ENCODE measurements at regions of chr14 and their contacts with region 1.

Region 1: DNA sequence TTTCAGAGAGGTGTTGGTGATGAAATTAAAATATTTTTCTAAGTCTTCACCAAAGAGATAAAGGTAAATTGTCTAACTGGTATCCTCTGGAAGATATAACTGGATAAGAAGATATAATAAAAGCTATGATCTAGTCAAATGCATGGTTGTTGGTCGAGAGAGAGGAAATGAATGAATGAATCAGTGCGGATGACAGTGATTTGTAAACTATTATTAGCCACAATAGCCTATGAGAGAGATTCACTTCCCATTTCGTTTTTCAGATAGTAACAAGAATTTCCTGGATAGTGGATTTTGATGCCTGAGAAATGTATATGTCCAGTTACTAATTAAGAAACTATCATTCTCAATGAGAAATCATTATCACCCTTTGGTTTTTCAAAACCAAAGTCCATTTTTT is 63.1 kb downstream of the HEATR5A start:
- DNase-seq: no peak
- ATAC-seq: no peak
- H3K4me3 ChIP-seq: no peak overlapping the region
- H3K27ac ChIP-seq: no peak overlapping the region
- H3K4me1 ChIP-seq: peaks cover 20% of the 10 kb centered on the region
- H3K27me3 ChIP-seq: no peaks in the 10 kb centered on the region
- CTCF ChIP-seq: no peak

Region 2: DNA sequence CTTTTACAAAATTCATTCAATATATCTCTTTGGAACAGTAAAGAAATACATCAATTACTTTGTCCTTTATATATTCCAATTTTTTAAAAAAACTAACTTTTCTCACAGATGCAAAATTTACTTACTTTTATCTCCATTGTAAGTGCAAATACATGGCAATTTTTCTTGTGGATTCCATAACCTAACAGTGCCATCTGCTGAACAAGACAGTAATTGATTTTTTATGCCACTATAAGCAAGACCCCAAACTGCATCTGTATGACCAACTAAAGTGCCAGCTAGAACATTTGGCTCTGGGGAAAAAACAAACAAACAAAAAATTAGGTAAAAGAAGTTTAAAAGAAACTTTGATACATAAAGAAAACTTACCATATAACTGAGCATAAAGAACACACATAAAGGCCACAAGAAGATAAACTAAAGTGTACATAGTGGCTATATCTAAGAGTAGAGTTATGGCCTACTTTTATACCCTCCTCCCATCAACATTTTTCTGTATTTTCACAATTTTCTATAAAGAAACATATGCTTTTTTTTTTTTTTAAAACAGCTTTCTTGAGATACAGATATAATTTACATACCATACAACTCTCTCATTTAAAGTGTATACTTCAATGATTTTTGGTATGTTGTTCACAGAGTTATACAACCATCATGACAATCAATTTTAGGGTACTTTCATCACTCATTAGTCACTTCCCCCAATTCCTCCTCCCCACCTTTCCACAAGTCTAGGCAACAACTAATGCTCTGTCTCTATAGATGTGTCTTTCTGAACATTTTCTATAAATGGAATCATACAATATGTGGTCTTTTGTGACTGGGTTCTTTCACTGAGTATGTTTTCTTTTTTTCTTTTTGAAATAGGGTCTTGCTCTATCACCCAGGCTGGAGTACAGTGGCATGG is 450.3 kb before region 1 on chr14:
- intact Hi-C with region 1: loop called in 1 of 2 experiments (anchors 10 kb)
- DNase-seq: no peak
- ATAC-seq: no peak
- H3K4me3 ChIP-seq: no peak overlapping the region
- H3K27ac ChIP-seq: peak overlapping the region; percentile 25
- H3K4me1 ChIP-seq: no peaks in the 10 kb centered on the region
- H3K27me3 ChIP-seq: no peaks in the 10 kb centered on the region
- CTCF ChIP-seq: peak; percentile 14

Region 3: DNA sequence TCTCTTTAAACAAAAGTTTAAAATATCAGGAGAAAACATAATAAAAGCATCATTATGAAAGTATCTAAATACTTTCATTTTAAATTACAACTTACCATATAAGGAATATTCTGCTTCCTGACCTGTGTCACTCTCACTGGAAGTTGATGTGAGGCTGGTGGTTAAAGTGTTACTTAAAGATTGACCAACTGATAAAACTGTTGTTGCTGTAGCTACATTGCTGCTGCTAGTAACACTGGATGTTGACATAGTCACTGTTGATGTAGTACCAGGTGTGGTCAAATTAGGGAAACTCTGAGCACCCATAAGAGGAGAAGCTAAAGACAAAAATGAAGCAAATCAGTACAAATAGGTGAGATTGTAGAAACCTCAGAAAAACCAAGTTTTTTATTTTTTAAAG is 229.6 kb before region 1 on chr14:
- intact Hi-C with region 1: loop called in 1 of 2 experiments (anchors 10 kb)
- DNase-seq: no peak
- ATAC-seq: no peak
- H3K4me3 ChIP-seq: no peak overlapping the region
- H3K27ac ChIP-seq: no peak overlapping the region
- H3K4me1 ChIP-seq: peaks cover 11% of the 10 kb centered on the region
- H3K27me3 ChIP-seq: no peaks in the 10 kb centered on the region
- CTCF ChIP-seq: no peak

Region 4: DNA sequence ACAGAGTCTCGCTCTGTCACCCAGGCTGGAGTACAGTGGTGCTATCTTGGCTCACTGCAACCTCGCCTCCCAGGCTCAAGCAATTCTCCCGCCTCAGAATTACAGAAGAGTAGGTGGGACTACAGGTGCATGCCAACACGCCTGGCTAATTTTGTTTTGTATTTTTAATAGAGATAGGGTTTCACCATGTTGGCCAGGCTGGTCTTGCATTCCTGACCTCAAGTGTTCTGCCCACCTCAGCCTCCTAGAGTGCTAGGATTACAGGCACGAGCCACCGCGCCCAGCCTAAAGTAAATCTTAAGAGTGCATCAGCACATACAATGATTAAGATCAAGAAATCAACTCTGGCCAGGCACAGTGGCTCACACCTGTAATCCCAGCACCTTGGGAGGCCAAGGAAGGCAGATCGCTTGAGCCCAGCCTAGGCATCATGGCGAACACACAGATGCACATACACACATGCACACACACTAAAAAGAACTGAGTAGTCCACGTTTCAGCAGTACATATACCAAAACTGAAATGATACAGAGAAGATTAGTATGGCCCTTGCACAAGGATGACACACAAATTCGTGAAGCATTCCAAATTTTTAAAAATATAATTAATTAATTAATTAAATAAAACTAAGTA is 214.7 kb before region 1 on chr14:
- intact Hi-C with region 1: loop called in 1 of 2 experiments (anchors 10 kb)
- DNase-seq: no peak
- ATAC-seq: peak; percentile 52 to 74 (median 64)
- H3K4me3 ChIP-seq: no peak overlapping the region
- H3K27ac ChIP-seq: no peak overlapping the region
- H3K4me1 ChIP-seq: peaks cover 16% of the 10 kb centered on the region
- H3K27me3 ChIP-seq: no peaks in the 10 kb centered on the region
- CTCF ChIP-seq: no peak

Measured in psoas muscle (tissue), 8 donors.